Lower leg skin (tissue), 4 donors: ENCODE measurements at regions of chr2 and their contacts with region 1.

Region 1: DNA sequence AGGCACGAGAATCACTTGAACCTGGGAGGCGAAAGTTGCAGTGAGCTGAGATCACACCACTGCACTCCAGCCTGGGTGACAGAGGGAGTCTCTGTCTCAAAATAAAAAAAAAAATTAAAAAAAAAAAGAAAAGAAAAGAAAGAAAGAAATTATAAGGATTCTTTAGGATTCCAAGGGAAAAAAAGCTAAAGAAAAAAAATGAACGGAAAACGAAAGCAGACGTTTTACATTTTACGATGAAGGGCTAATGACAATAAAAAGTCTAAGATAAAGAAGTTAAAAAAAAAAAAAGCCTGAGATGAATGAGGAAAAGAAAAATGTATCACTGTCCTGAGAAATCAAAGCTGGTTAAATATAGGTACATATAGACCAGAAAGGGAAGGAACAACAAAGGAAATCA is 58.5 kb downstream of the SOS1 start:
- DNase-seq: no peak
- H3K4me3 ChIP-seq: no peak overlapping the region
- CTCF ChIP-seq: no peak
- POLR2A ChIP-seq: no peak

Region 2: DNA sequence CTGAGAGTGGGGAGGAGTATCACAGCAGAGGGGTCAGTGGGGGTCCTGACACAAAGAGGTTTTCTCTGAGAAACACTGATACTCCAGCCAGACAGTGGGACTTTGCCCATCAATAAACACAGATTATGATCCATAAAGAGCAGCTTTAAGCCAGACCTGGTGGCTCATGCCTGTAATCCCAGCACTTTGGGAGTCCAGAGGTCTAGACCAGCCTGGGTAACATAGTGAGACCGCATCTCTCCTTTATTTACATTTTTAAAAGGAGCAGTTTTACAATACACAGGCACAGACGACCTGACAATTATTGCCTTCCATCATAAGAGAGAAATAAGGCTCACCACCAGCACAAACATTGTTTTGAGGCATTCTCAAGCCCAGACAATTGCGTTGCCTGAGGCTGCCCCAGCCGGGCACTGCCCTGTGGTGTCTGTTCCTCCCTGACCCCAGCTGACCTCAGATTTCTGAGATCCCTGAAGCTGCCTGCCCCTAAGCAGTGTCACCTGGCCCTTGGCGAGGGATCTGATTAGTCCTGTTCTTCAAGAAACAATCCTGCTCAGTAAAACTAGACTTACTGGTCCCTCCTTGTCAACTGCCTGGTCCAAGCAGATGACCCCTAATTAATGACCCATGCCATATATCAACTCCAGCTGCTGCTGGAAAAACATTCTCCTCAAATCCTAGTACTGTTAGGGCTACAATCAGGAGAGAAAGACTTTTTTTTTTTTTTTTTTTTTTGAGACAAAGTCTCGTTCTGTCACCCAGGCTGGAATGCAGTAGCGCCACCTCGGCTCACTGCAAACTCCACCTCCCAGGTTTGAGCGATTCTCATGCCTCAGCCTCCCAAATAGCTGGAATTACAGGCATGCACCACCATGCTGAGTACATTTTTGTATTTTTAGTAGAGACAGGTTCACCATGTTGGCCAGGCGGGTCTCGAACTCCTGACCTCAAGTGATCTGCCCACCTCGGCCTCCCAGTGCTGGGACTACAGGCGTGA is 118.0 kb after region 1 on chr2:
- intact Hi-C with region 1: no loop called
- DNase-seq: no peak
- H3K4me3 ChIP-seq: no peak overlapping the region
- CTCF ChIP-seq: no peak
- POLR2A ChIP-seq: no peak

Region 3: GRCh38 chr2:39227628-39228412 is 165.5 kb after region 1 on chr2:
- intact Hi-C with region 1: loop called (anchors 5 kb)
- DNase-seq: peak; percentile 64 to 95
- H3K4me3 ChIP-seq: no peak overlapping the region
- CTCF ChIP-seq: peak in 1 of 3 donors; percentile 72
- POLR2A ChIP-seq: no peak